ENCODE measurements at regions of chr14 and their contacts with region 1.

Region 1: DNA sequence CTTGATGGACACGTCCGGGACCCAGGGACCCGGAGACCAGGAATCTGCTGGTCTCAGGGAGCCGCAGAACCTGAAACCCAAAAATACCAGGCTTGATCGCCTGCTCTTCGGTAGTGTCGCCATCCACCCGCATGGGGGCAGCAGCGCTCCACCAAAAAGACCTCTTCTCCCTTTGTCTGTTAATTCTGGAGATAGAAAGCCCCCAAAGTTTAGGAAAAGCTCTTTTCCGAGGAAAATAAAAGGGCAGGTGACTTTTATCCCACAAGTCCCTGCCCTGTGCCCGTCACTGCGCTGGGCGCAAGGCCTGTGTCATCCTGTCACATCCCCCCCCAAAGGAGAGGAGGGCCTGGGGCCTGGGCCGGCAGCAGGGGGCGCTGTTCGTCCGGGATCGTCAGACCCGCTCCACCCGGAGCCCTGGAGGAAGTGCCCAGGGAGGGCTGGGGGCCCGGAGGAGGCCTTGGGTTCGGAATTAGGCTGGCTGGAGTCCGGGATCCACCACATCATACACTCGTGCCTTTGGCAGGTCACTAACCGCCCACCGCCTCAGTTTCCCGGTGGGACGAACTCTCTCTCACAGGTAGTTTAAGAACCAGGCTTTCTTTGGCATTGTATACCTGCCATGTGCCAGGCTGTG is 31.9 kb downstream of the DAD1 start:
- DNase-seq: no peak
- H3K4me3 ChIP-seq: peak overlapping the region; percentile 39 to 56 (median 49)
- H3K27ac ChIP-seq: peak overlapping the region; percentile 47 to 65 (median 55)
- H3K4me1 ChIP-seq: peaks cover 28 to 42% (median 34%) of the 10 kb centered on the region in 4 donors
- H3K27me3 ChIP-seq: no peaks in the 10 kb centered on the region
- CTCF ChIP-seq: peak in 2 of 3 experiments; percentile 96 to 99
- EP300 ChIP-seq: no peak
- POLR2A ChIP-seq: peak; percentile 6

Region 2: DNA sequence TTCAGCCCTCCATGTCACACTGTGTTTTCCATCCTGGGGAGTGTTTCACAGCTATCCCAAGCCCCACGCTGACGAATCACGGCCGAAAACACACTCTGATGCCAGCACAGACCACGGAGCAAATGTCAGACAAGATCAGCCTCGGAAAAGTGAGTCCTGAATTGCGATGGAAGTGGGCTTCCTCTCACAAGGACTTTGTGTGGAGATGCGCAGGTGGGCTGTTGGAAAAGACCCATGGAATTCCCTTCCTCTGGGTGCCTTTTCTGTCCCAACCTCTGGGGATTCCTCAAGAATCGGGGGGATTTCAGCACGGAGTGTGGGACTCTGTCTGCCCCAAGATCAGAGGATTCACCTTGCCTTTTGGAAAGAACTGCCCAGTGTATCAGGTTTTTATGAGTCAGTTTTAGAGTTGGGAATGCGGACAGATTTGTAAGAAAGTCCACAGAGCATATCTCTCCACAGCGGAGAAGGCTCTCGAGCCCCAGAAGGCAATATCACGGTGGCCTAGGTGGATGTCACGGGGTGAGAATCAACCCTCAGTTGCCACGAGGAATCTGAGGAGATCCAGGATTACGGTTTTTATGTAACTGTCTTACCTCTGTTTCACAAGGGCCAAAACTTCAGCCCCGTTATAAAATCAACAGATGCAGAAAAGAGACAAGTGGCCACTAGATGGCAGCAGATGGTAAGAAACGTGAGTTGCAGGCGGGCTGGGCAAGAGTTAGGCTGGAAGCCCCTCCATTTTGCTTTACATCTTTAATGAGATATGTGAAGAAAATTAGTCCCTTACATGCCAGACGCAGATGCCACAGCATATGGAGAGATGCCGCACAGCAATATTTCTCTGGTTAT is 170.0 kb before region 1 on chr14:
- intact Hi-C with region 1: loop called (anchors 5 kb)
- DNase-seq: no peak
- H3K4me3 ChIP-seq: no peak overlapping the region
- H3K27ac ChIP-seq: no peak overlapping the region
- H3K4me1 ChIP-seq: peaks cover 0 to 6% (median 2%) of the 10 kb centered on the region in 4 donors
- H3K27me3 ChIP-seq: peaks cover 0 to 44% (median 0%) of the 10 kb centered on the region in 4 donors
- CTCF ChIP-seq: peak; percentile 71 to 78 (median 75)
- EP300 ChIP-seq: no peak
- POLR2A ChIP-seq: no peak

Region 3: DNA sequence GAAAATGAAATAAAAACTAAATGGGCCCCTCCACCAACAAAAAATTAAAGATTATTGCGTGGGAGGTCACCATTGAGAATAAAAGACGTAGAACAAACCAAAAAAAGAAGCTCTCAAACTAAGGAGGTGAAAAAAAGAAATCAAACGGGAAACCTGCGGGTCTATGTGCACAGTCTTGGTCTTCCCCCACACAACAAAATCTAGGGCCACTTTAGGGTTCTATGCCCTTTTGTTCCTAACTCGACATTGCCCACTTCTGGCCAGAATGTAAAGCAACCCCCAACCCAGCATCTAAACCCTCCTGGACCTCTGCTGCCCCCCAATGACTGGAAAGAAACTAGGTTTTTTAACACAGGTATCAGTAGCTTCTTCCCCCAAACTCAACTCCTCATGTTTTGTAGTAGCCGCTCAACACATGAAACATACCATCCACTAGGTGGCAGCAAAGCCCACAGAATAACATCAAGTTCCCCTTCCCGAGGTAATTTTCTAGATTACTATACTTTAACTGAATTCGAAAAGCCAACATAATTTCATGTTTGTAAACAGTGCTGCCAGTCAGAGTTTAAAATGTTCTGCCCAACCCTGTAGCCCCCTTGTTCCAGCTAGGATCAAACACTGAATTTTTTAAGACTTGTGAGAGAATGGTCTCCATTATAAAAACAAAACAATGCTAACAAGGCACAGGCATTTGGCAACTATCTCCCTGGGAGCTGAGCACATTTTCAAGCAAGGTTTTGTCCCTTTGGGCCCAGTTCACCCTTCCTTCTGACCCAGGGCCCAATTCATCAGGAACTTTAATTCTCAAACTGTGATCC is 13.2 kb after region 1 on chr14:
- intact Hi-C with region 1: loop called (anchors 1 kb)
- DNase-seq: no peak
- H3K4me3 ChIP-seq: no peak overlapping the region
- H3K27ac ChIP-seq: peak overlapping the region; percentile 16 to 56 (median 52)
- H3K4me1 ChIP-seq: peaks cover 15 to 32% (median 26%) of the 10 kb centered on the region in 4 donors
- H3K27me3 ChIP-seq: no peaks in the 10 kb centered on the region
- CTCF ChIP-seq: peak; percentile 84 to 91 (median 88)
- EP300 ChIP-seq: no peak
- POLR2A ChIP-seq: no peak

Region 4: DNA sequence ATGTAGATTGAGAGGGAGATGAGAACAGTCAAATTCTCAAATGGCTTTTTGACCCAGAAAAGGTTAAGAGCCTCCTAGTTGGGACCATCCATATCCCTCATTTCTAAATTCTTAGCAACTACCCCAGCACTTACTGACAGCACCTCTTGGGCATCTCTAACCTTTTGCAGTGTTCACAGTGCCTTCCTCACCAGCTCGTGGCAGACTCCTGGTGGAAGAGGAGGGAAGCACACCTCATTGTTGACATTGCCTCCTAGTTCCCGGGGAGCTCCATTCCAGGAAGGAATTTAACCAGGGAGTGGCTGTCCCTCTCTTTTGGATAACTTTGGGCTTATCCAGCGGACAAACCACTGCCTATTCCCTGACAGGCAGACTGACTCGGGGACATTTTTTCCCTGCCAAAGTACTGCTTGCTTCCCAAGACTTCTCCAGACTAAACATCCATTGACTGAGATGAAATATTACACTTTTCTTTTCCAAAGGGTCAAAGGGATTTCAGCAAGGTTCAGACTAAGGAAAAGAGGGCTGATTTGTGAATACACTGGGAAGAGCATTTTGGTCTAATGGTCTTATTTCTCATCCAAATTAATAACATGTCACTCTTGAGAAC is 96.0 kb after region 1 on chr14:
- intact Hi-C with region 1: loop called (anchors 5 kb)
- DNase-seq: no peak
- H3K4me3 ChIP-seq: no peak overlapping the region
- H3K27ac ChIP-seq: no peak overlapping the region
- H3K4me1 ChIP-seq: peaks cover 0 to 5% (median 0%) of the 10 kb centered on the region in 4 donors
- H3K27me3 ChIP-seq: no peaks in the 10 kb centered on the region
- CTCF ChIP-seq: peak; percentile 69 to 83 (median 83)
- EP300 ChIP-seq: no peak
- POLR2A ChIP-seq: no peak

Region 5: GRCh38 chr14:22822571-22823098 is 265.5 kb after region 1 on chr14:
- intact Hi-C with region 1: loop called (anchors 5 kb)
- DNase-seq: peak; percentile 95
- H3K4me3 ChIP-seq: peak overlapping the region; percentile 52 to 67 (median 55)
- H3K27ac ChIP-seq: peak overlapping the region; percentile 65 to 84 (median 75)
- H3K4me1 ChIP-seq: peaks cover 20 to 55% (median 47%) of the 10 kb centered on the region in 4 donors
- H3K27me3 ChIP-seq: no peaks in the 10 kb centered on the region
- CTCF ChIP-seq: peak; percentile 89 to 94 (median 90)
- EP300 ChIP-seq: no peak
- POLR2A ChIP-seq: no peak

Region 6: DNA sequence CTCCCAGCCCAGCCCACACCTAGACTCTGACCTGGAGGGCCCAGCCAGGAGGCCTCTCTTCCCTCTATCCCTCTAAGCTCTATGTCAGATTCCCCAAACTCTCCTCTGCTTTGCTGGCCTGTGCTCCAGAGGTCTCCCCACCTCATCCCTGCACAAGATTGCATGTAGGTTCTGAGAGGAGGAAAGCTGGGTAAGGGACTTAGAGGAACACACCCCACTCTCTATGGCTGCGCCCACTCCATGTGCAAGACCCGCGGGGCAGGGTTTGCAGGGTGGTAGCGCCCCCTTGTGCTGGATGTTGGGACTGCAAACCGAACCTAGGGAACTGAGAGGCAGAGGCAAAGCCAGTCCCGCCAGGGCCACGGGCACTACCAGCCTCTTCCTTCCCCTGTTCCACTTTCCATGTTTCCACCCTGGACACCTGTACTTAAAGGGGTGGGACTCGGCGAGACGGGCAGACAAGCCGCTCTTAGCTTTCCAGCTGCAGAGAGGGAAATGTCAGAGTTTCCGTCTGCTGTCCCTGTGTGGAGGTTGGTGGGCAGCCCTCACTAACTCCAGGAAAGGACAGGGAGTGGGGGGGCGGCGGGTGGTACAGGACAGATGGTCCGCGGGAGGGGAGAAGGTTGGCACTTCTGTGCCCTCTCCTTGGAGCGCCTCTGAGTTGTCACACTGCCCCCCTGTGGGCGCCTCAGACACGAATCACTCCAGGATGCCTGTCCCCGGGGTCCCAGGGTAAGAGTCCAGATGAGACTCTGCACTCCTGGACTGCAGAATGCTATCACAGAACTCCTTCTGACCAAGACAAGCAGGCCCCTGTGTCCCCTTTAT is 296.0 kb after region 1 on chr14:
- intact Hi-C with region 1: loop called (anchors 10 kb)
- DNase-seq: peak; percentile 99
- H3K4me3 ChIP-seq: peak overlapping the region; percentile 45 to 60 (median 46)
- H3K27ac ChIP-seq: peak overlapping the region; percentile 36 to 93 (median 88)
- H3K4me1 ChIP-seq: peaks cover 46 to 55% (median 53%) of the 10 kb centered on the region in 4 donors
- H3K27me3 ChIP-seq: no peaks in the 10 kb centered on the region
- CTCF ChIP-seq: peak; percentile 73 to 94 (median 91)
- EP300 ChIP-seq: no peak
- POLR2A ChIP-seq: no peak

Measured in esophagus muscularis mucosa (tissue), 4 donors.